Endothelial cell of umbilical vein (primary cell): ENCODE measurements at regions of chr5 and their contacts with region 1.

Region 1: DNA sequence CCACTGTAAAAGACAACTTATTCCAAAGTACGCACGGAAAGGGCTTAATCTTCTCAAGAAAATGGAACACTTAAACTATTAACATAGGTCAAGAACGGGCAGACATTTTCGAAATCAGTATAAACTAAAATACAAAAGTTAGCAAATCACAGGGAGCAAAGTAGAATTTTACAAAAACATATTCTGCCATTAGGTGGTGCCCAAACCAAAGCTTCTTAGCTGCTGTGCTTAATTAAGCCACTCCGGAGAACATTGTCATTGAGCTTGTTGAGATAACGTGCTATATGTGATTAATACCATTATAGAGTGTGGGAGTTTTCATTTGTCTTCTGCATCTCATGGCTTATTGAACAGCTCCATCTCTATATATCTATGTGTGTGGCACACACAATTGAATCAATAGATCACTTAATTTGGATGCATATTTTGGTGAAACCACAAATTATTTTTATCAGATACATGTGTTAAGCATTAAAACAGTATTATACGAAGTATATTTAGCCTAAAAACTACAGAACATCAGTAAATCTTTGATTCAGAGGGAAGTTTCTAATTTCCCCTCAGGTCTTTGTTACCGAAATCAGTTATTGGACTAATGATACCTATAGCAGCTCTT is 23.4 kb downstream of the UBLCP1 start:
- DNase-seq: peak; percentile 47
- H3K4me3 ChIP-seq: no peak overlapping the region
- H3K27ac ChIP-seq: no peak overlapping the region
- H3K4me1 ChIP-seq: no peaks in the 10 kb centered on the region
- H3K27me3 ChIP-seq: no peaks in the 10 kb centered on the region
- CTCF ChIP-seq: peak in 1 of 2 donors; percentile 31
- POLR2A ChIP-seq: no peak

Region 2: GRCh38 chr5:158522776-158523175 is 763.8 kb before region 1 on chr5:
- CTCF ChIA-PET with region 1: no interaction called
- POLR2A ChIA-PET with region 1: no interaction called
- dilution Hi-C with region 1: no loop called
- intact Hi-C with region 1: no loop called
- DNase-seq: no peak
- H3K4me3 ChIP-seq: no peak overlapping the region
- H3K27ac ChIP-seq: no peak overlapping the region
- H3K4me1 ChIP-seq: no peaks in the 10 kb centered on the region
- H3K27me3 ChIP-seq: no peaks in the 10 kb centered on the region
- CTCF ChIP-seq: no peak
- POLR2A ChIP-seq: no peak

Region 3: DNA sequence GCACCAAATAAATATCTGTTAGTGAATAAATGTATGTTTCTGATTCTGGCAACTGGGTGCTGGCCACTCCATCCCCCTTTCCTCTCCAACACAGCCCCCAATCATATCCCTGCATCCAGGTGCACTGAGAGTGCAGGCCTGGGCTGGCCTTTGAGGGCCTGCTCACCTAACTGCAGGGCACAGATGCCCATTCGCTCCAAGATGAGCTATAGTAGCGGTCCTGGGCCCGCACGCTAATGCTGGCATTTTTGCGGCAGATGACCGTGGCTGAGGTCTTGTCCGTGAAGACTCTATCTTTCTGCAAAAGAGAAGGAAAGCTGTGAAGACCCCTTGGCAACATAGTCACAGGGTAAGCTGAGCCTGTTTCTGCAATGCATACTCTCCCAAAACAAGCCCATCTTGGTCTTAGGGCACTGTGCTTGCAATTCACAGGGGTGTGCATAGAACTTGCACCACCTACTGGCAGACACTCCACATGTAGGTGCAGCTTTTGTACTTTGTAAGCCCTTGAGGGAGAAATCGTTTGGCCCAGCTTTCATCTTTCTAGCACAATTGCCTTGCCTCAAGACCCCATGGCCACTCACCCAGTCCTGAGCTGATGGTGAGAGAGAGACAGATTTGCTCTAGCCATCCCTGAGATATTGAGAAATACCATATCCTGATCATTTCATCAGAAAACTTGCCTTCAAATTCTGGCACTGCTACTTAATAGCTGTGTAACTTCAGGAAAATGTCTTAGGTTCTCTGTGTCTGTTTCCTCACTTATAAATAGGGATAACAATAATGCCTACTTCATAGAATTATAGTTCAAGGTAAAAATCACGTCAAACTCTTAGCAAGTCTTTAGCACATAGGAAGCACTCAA is 30.2 kb after region 1 on chr5:
- CTCF ChIA-PET with region 1: interaction called, 12 read pairs
- POLR2A ChIA-PET with region 1: no interaction called
- dilution Hi-C with region 1: no loop called
- intact Hi-C with region 1: no loop called
- DNase-seq: peak; percentile 51
- H3K4me3 ChIP-seq: no peak overlapping the region
- H3K27ac ChIP-seq: no peak overlapping the region
- H3K4me1 ChIP-seq: no peaks in the 10 kb centered on the region
- H3K27me3 ChIP-seq: peaks cover 4 to 5% of the 10 kb centered on the region in 2 experiments
- CTCF ChIP-seq: peak; percentile 33 to 69
- POLR2A ChIP-seq: no peak

Region 4: DNA sequence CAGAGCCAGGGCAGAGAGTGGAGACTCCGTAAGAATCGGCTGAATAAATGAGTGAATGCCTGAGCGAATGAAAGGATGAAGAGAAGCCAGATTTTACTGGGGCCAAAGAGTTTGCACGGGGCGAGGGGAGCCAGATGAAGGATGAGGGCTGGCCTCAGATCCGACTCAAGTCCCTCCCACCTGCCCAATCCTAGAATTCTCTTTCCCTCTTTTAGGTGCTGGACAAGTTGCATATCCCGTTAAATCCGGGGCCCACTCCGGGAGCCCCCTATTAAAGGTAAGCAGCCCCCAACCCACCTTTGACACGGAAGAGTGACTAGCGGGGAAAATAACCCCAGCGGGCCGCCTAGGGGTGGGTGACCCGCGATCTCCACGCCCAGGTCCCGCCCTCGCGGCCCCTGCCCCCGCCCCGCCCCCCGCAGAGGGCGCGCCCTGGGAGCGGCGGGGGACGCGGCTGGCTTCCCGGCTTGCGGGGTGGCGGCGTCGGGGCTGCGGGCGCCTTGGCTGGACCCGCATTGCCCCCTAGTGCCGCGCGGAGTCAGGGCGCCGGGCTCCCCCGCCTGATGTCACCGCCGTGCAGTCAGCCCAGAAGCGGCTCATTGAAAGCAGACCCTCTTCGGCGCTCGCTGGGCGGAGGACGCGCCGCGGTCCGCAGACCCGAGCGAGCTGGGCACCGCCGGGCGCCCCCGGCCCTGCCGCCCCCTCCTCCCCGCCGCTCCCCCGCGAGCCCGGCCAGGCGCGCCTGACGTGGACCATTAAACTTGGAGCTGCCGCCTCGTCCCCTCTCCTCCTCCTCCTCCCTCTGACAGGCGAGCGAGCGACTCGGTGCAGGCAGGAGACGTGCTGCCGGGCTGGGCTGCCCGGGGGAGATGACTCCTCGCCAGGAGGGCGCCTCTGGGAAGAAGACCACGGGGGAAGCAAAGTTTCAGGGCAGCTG is 629.6 kb after region 1 on chr5 and contains the start of gene ADRA1B:
- CTCF ChIA-PET with region 1: interaction called, 3 read pairs
- POLR2A ChIA-PET with region 1: no interaction called
- dilution Hi-C with region 1: no loop called
- intact Hi-C with region 1: loop called (anchors 5 kb)
- DNase-seq: peak; percentile 42
- H3K4me3 ChIP-seq: peak within 1 kb of the TSS in 2 of 3 experiments; percentile 28 to 48
- H3K27ac ChIP-seq: no peak within 1 kb of the TSS
- H3K4me1 ChIP-seq: peaks cover 27% of the 10 kb centered on the region
- H3K27me3 ChIP-seq: peaks cover 4 to 10% of the 10 kb centered on the region in 2 experiments
- CTCF ChIP-seq: peak; percentile 19 to 55
- POLR2A ChIP-seq: no peak
- total RNA-seq, gene ADRA1B: 0.21 TPM in 1 of 2 replicates, not detected in the other

Region 5: GRCh38 chr5:160245506-160246086 is 959.1 kb after region 1 on chr5:
- CTCF ChIA-PET with region 1: no interaction called
- POLR2A ChIA-PET with region 1: no interaction called
- dilution Hi-C with region 1: no loop called
- intact Hi-C with region 1: no loop called
- DNase-seq: no peak
- H3K4me3 ChIP-seq: no peak overlapping the region
- H3K27ac ChIP-seq: no peak overlapping the region
- H3K4me1 ChIP-seq: no peaks in the 10 kb centered on the region
- H3K27me3 ChIP-seq: no peaks in the 10 kb centered on the region
- CTCF ChIP-seq: no peak
- POLR2A ChIP-seq: no peak

Region 6: DNA sequence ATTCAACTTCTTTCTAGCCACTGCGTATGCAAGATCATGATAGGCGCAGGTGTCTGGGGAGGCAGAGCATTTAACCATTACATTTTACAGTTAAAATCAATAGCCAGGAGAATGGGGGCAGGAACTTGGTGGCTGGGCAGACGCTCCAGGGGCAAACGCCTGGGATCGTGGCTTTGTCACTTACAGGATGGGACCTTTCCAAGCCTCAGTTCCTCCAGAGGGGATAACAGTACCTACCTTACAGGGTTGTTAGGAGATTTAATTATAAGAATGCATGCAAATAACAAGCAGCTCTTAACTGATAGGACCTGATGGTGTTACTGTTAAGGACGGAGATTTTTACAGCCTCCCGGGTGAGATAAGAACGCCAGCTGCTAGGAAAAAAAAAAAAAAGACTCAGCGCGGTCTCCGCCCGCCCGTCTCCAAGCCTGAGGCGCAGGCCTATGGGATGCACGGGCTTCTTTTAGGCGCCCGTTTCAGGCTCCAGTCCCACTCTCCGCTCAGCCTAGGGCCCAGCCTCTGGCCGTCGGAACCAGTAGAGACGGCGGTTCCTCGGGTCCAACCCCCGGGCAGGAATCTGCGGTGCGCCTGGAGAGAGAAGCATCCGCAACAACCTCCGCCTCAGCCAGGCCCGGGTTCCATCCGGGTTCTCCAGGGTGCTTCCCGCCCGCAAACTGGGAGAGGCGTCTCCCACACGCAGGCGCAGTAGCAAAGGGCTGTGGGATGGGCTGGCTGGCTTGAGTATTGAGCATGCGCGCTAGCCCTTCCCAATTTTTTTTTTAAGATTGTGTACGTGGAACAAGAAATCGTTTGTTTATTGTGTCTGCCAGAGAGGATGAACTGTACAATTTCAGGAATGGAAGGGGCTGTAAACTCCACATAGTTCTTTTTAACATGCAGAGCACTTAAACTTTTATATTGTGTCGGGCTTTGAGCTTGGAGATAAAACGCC is 1113.2 kb after region 1 on chr5 and contains the start of gene FAM200C:
- CTCF ChIA-PET with region 1: no interaction called
- POLR2A ChIA-PET with region 1: no interaction called
- dilution Hi-C with region 1: no loop called
- intact Hi-C with region 1: loop called (anchors 10 kb)
- DNase-seq: peak; percentile 95
- H3K4me3 ChIP-seq: peak within 1 kb of the TSS; percentile 57 to 84 (median 72)
- H3K27ac ChIP-seq: peak within 1 kb of the TSS; percentile 77
- H3K4me1 ChIP-seq: peaks cover 9% of the 10 kb centered on the region
- H3K27me3 ChIP-seq: no peaks in the 10 kb centered on the region
- CTCF ChIP-seq: no peak
- POLR2A ChIP-seq: peak; percentile 96
- total RNA-seq, gene FAM200C: 2.6 and 2.7 TPM in 2 replicates